WTC11 (cell line): ENCODE measurements at regions of chr15 and their contacts with region 1.

Region 1: GRCh38 chr15:100341662-100342560 is at the start of gene ADAMTS17:
- DNase-seq: peak; percentile 96
- ATAC-seq: peak; percentile 96
- H3K4me3 Mint-ChIP-seq: peak within 1 kb of the TSS; percentile 61
- H3K27ac Mint-ChIP-seq: no peak within 1 kb of the TSS
- H3K4me1 Mint-ChIP-seq: peaks cover 26% of the 10 kb centered on the region
- H3K27me3 Mint-ChIP-seq: peaks cover 63% of the 10 kb centered on the region
- CTCF ChIP-seq: peak; percentile 78
- total RNA-seq, gene ADAMTS17: 1.8 to 2.8 TPM (median 2.2 TPM) in 3 replicates

Region 2: GRCh38 chr15:99928429-99928981 is 413.4 kb before region 1 on chr15:
- CTCF ChIA-PET with region 1: interaction called, 42 read pairs
- POLR2A ChIA-PET with region 1: no interaction called
- DNase-seq: peak; percentile 55
- ATAC-seq: peak; percentile 13
- H3K4me3 Mint-ChIP-seq: peak overlapping the region; percentile 81
- H3K27ac Mint-ChIP-seq: no peak overlapping the region
- H3K4me1 Mint-ChIP-seq: peaks cover 31% of the 10 kb centered on the region
- H3K27me3 Mint-ChIP-seq: peaks cover 39% of the 10 kb centered on the region
- CTCF ChIP-seq: peak; percentile 49

Region 3: DNA sequence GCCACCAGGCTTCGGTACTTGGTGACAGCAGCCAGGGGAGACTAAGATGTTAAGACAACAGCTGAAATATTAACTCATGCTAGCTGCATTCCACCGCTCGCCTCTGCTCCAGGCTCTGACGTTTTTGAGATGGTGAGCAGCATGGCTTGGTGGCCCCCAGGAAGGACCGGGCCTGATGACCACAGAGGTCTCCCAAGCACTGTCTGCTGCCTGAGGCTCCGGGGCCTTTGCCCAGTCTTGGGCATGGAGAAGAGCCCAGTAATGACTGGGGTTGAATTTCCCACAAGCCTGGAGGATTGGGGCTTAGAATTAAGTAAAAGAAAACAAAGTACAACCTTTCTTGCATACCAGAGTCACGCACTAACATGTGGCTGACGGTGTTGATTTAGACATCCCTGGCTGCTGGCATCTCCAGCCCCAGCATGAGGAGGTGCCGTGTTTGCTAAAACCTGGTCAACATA is 365.1 kb before region 1 on chr15:
- CTCF ChIA-PET with region 1: interaction called, 23 read pairs
- POLR2A ChIA-PET with region 1: interaction called, 3 read pairs
- DNase-seq: no peak
- ATAC-seq: no peak
- H3K4me3 Mint-ChIP-seq: no peak overlapping the region
- H3K27ac Mint-ChIP-seq: no peak overlapping the region
- H3K4me1 Mint-ChIP-seq: peaks cover 20% of the 10 kb centered on the region
- H3K27me3 Mint-ChIP-seq: no peaks in the 10 kb centered on the region; the same call in 1 of the 2 replicates
- CTCF ChIP-seq: no peak

Region 4: DNA sequence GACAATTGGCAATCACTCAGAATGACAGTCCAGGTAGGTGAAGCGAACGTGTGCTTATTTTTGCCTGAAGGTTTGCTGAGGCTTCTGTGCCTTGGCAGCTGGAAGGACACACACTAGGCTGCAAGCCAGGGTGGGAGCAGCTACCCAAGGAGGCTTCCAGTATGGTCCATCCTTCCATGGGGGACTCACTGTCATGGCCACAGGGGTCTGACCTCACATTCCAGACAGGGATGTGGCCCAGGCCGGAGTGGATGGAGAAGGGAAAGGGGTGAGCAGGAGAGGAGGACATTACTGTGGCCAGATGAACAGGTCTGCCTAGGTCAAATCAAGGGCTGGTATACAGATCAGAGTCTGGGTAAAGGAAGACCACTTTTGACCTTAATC is 247.8 kb before region 1 on chr15:
- CTCF ChIA-PET with region 1: no interaction called
- POLR2A ChIA-PET with region 1: no interaction called
- DNase-seq: no peak
- ATAC-seq: no peak
- H3K4me3 Mint-ChIP-seq: no peak overlapping the region
- H3K27ac Mint-ChIP-seq: no peak overlapping the region
- H3K4me1 Mint-ChIP-seq: peaks cover 9% of the 10 kb centered on the region
- H3K27me3 Mint-ChIP-seq: no peaks in the 10 kb centered on the region; the same call in 1 of the 2 replicates
- CTCF ChIP-seq: no peak

Region 5: DNA sequence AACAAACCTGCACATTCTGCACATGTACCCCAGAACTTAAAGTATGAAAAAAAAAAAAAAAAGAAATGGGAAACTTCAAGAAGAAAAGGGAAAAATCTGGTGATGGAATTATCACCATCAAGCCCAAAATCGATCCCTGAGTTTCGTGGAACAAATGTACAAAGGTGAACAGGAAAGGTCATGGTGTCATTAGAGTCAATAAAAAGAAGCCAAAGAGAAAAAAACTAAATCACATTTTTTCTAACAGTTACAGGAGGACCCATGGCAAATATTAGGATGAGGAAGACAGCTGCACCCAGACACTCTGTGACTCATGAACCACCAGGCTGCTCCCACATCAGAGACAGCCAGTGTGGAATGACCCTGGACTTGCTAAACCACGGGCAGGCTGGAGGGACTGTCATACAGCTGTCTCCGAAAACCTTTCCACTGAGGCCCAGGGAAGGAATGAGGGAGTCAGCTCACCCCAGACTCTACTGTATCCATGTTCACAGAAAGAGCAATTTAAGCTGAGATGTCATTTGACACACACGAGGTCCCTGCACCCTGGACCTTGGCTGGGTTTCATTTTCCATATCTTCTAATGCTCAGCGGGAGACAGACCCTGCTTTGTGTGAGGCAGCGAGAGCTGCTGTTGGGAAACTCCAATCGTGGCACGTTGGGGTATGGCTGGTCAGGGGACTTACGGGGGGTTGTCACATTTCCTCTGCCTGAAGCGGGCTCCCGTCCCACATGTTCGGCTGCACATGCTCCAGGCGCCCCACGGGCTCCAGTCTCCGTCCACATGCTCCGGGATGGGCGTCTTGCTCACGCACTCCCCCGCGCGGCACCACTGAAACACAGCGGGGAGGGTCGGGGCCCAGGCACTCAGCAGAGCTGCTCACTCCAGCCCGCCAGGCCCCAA is 210.3 kb before region 1 on chr15:
- CTCF ChIA-PET with region 1: interaction called, 22 read pairs
- POLR2A ChIA-PET with region 1: no interaction called
- DNase-seq: peak; percentile 36
- ATAC-seq: peak; percentile 73
- H3K4me3 Mint-ChIP-seq: no peak overlapping the region
- H3K27ac Mint-ChIP-seq: no peak overlapping the region
- H3K4me1 Mint-ChIP-seq: no peaks in the 10 kb centered on the region
- H3K27me3 Mint-ChIP-seq: no peaks in the 10 kb centered on the region
- CTCF ChIP-seq: no peak

Region 6: GRCh38 chr15:100264994-100265673 is 76.8 kb before region 1 on chr15:
- CTCF ChIA-PET with region 1: no interaction called
- POLR2A ChIA-PET with region 1: no interaction called
- DNase-seq: no peak
- ATAC-seq: no peak
- H3K4me3 Mint-ChIP-seq: no peak overlapping the region
- H3K27ac Mint-ChIP-seq: no peak overlapping the region
- H3K4me1 Mint-ChIP-seq: peaks cover 6% of the 10 kb centered on the region; the same call in 1 of the 2 replicates
- H3K27me3 Mint-ChIP-seq: no peaks in the 10 kb centered on the region; the same call in 1 of the 2 replicates
- CTCF ChIP-seq: no peak

Region 7: DNA sequence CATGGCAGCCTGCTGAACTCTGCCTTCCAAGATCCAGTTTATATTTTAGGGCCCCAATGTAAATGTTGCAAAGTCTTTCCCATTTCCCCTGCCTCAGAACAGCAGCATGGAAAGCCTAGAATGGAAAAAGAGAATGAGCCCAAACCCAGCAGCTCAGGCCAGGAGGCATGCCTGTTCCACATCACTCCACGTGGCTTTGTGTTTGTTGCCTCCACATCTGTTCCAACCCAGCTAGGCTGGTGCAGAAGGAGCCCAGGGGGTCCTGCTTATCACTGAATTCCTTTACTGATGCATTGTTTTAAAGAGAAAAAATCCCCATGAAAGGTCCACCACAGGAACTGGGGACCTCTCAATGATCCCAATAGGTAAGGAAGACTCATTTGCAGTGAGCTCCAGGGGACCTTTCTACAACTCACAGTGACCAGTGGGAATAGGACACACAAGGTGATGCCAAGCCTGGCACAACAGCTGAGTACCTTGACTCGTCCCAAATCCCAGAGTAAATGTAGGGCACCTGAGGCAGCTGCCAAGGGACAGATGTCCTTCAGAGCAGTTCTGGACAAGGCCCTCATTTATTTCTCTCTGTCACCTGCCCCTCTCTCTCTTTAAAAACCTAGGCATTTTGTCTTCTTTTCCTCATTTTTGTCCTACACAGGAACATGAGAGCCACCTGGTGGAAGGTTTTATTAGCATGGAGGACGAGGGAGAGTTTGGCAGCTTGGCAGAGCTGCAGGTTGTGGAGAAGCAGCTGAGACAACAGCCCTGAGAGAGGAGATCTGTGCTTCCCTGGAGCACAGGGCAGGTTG is 41.6 kb after region 1 on chr15:
- CTCF ChIA-PET with region 1: interaction called, 12 read pairs
- POLR2A ChIA-PET with region 1: interaction called, 3 read pairs
- DNase-seq: peak; percentile 40
- ATAC-seq: peak; percentile 77
- H3K4me3 Mint-ChIP-seq: no peak overlapping the region
- H3K27ac Mint-ChIP-seq: no peak overlapping the region
- H3K4me1 Mint-ChIP-seq: no peaks in the 10 kb centered on the region
- H3K27me3 Mint-ChIP-seq: peaks cover 7% of the 10 kb centered on the region
- CTCF ChIP-seq: 0 out of 2 replicates have a peak, but pooled peaks have one; percentile 33